ENCODE measurements at regions of chr11 and their contacts with region 1.

Region 1: DNA sequence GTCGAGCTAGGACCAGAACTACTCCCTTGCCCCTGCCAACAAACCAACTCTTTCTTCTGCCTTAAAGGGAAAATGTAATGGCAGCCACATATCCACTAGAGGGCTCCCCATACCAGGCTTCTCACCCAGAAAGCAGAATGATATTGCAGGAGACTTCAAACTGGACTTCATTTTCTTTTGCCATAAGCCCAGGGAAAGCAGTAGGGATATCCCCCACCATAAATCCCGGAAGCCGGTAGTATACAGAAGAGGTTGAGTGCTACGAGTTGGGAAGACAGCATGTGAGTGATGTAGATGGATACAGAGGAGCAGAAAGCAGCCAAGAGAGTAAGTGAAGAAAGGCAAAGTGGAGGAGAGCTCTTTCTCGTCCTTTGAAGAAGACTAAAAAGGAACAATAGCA is 12.1 kb downstream of the PLAAT5 start:
- DNase-seq: peak; percentile 6 to 70 (median 57)
- H3K4me3 ChIP-seq: no peak overlapping the region
- H3K4me3 Mint-ChIP-seq: no peak overlapping the region
- H3K27ac ChIP-seq: no peak overlapping the region
- H3K27ac Mint-ChIP-seq: no peak overlapping the region
- H3K4me1 ChIP-seq: no peaks in the 10 kb centered on the region
- H3K4me1 Mint-ChIP-seq: no peaks in the 10 kb centered on the region
- H3K27me3 ChIP-seq: no peaks in the 10 kb centered on the region
- H3K27me3 Mint-ChIP-seq: peaks cover 0 to 2% of the 10 kb centered on the region in 2 donors

Region 2: DNA sequence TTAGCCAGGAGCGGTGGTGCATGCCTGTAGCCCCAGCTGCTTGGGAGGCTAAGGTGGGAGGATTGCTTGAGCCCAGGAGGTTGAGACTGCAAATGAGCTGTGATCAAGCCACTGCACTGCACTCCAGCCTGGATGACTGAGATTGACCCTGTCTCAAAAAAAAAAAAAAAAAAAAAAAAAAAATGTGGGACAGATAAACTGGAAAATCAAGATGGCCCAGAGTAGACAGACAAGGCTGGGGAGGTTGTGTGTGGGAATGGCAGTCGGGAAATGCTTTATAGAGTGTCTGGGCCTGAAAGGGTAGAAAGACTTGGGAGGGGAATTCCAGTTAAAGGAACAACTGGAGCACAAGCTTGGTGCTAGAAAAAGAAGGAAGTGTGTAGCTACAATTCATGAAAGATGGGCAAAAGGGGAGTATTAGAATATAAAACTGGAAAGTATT is 621.3 kb before region 1 on chr11:
- CTCF ChIA-PET with region 1: no interaction called
- POLR2A ChIA-PET with region 1: no interaction called
- DNase-seq: no peak
- H3K4me3 ChIP-seq: no peak overlapping the region
- H3K4me3 Mint-ChIP-seq: peak overlapping the region; percentile 13 to 94 (median 21)
- H3K27ac ChIP-seq: peak overlapping the region; percentile 94
- H3K27ac Mint-ChIP-seq: peak overlapping the region in 2 of 8 donors; percentile 43 to 66
- H3K4me1 ChIP-seq: peaks cover 33% of the 10 kb centered on the region
- H3K4me1 Mint-ChIP-seq: peaks cover 41 to 47% (median 45%) of the 10 kb centered on the region in 3 donors
- H3K27me3 ChIP-seq: no peaks in the 10 kb centered on the region
- H3K27me3 Mint-ChIP-seq: peaks cover 0 to 6% of the 10 kb centered on the region in 2 donors

Region 3: GRCh38 chr11:63490551-63491239 is 11.8 kb after region 1 on chr11 and contains the start of gene PLAAT5:
- CTCF ChIA-PET with region 1: interaction called, 12 read pairs
- POLR2A ChIA-PET with region 1: no interaction called
- DNase-seq: peak in 1 of 5 donors; percentile 7
- H3K4me3 ChIP-seq: no peak within 1 kb of the TSS
- H3K4me3 Mint-ChIP-seq: peak within 1 kb of the TSS; percentile 70 to 91 (median 85)
- H3K27ac ChIP-seq: no peak within 1 kb of the TSS
- H3K27ac Mint-ChIP-seq: peak within 1 kb of the TSS in 5 of 8 donors; percentile 69 to 87 (median 80)
- H3K4me1 ChIP-seq: no peaks in the 10 kb centered on the region
- H3K4me1 Mint-ChIP-seq: peaks cover 8 to 32% (median 18%) of the 10 kb centered on the region in 3 donors
- H3K27me3 ChIP-seq: no peaks in the 10 kb centered on the region
- H3K27me3 Mint-ChIP-seq: peaks cover 2 to 4% of the 10 kb centered on the region in 2 donors
- total RNA-seq, gene PLAAT5: 0.26 to 0.89 TPM

Region 4: GRCh38 chr11:63536669-63537292 is 57.9 kb after region 1 on chr11 and contains the start of gene PLAAT4:
- CTCF ChIA-PET with region 1: interaction called, 22 read pairs
- POLR2A ChIA-PET with region 1: no interaction called
- DNase-seq: peak in 4 of 5 donors; percentile 31 to 57 (median 54)
- H3K4me3 ChIP-seq: peak within 1 kb of the TSS; percentile 78
- H3K4me3 Mint-ChIP-seq: peak within 1 kb of the TSS; percentile 91 to 99 (median 98)
- H3K27ac ChIP-seq: peak within 1 kb of the TSS; percentile 69
- H3K27ac Mint-ChIP-seq: peak within 1 kb of the TSS; percentile 90 to 100 (median 98)
- H3K4me1 ChIP-seq: peaks cover 82% of the 10 kb centered on the region
- H3K4me1 Mint-ChIP-seq: peaks cover 85 to 95% (median 92%) of the 10 kb centered on the region in 3 donors
- H3K27me3 ChIP-seq: no peaks in the 10 kb centered on the region
- H3K27me3 Mint-ChIP-seq: peaks cover 0 to 3% of the 10 kb centered on the region in 2 donors
- total RNA-seq, gene PLAAT4: 20.5 to 21.8 TPM

Region 5: DNA sequence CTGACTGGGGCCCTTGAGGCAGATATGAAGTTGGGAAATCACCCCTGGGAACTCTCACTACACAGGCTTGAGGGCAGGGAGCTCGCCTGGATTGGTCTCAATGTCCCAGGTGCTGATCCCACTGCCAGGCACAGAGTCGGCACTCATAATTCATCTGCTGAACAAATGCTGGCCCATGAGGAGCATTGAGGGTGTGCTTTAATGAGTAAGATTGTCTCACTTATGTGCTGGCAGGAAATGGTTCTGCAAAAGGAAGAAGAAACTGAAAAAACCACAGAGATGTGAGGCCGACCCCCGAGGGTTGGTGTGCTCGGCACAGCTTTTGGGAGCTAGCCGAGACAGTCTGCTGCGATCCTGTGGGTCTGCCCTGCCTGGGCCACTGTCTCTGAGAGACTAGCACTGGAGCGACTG is 74.8 kb after region 1 on chr11:
- CTCF ChIA-PET with region 1: interaction called, 29 read pairs
- POLR2A ChIA-PET with region 1: interaction called, 3 read pairs
- DNase-seq: peak; percentile 45 to 84 (median 70)
- H3K4me3 ChIP-seq: peak overlapping the region; percentile 21
- H3K4me3 Mint-ChIP-seq: peak overlapping the region; percentile 44 to 95 (median 91)
- H3K27ac ChIP-seq: peak overlapping the region; percentile 70
- H3K27ac Mint-ChIP-seq: peak overlapping the region; percentile 88 to 99 (median 97)
- H3K4me1 ChIP-seq: peaks cover 43% of the 10 kb centered on the region
- H3K4me1 Mint-ChIP-seq: peaks cover 55 to 72% (median 70%) of the 10 kb centered on the region in 3 donors
- H3K27me3 ChIP-seq: no peaks in the 10 kb centered on the region
- H3K27me3 Mint-ChIP-seq: no peaks in the 10 kb centered on the region

Region 6: GRCh38 chr11:63629426-63629825 is 150.5 kb after region 1 on chr11:
- CTCF ChIA-PET with region 1: interaction called, 88 read pairs
- POLR2A ChIA-PET with region 1: no interaction called
- DNase-seq: no peak
- H3K4me3 ChIP-seq: no peak overlapping the region
- H3K4me3 Mint-ChIP-seq: no peak overlapping the region
- H3K27ac ChIP-seq: no peak overlapping the region
- H3K27ac Mint-ChIP-seq: no peak overlapping the region
- H3K4me1 ChIP-seq: no peaks in the 10 kb centered on the region
- H3K4me1 Mint-ChIP-seq: peaks cover 5 to 9% (median 7%) of the 10 kb centered on the region in 3 donors
- H3K27me3 ChIP-seq: no peaks in the 10 kb centered on the region
- H3K27me3 Mint-ChIP-seq: no peaks in the 10 kb centered on the region

Region 7: GRCh38 chr11:63635762-63636465 is 157.0 kb after region 1 on chr11:
- CTCF ChIA-PET with region 1: interaction called, 88 read pairs
- POLR2A ChIA-PET with region 1: interaction called, 3 read pairs
- DNase-seq: peak; percentile 57 to 78 (median 59)
- H3K4me3 ChIP-seq: no peak overlapping the region
- H3K4me3 Mint-ChIP-seq: no peak overlapping the region
- H3K27ac ChIP-seq: no peak overlapping the region
- H3K27ac Mint-ChIP-seq: peak overlapping the region in 6 of 8 donors; percentile 0 to 40 (median 6)
- H3K4me1 ChIP-seq: no peaks in the 10 kb centered on the region
- H3K4me1 Mint-ChIP-seq: peaks cover 9 to 23% (median 16%) of the 10 kb centered on the region in 3 donors
- H3K27me3 ChIP-seq: no peaks in the 10 kb centered on the region
- H3K27me3 Mint-ChIP-seq: no peaks in the 10 kb centered on the region

Region 8: DNA sequence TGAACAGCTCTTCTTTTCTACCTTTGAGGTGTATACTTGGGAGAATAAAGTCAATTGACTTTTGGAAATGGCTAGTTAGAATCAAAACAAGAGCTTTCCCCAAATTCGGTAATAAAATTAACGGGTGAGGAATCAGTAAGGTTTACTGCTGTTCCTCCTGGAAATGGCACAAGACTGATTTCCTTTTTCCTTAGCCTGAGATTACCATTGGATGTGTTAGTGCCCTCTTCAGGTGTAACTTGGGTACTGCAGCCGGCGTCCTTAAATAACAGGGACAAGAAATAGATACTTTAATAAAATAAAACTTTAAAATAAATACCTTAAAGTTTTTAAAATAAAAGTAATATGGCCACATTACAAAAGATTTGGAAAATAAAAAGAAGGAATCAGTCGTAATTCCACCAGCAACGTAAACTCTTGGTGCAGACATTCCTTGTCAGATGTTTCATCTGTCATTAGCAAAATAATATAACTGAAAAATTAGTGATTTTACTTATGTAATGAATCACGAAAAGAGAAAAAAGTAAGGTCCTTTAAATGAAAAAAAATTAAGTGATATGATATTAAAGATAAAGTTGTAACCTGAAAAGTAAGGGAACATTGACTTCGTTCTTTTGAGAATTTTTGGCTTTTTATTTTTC is 259.9 kb after region 1 on chr11:
- CTCF ChIA-PET with region 1: interaction called, 17 read pairs
- POLR2A ChIA-PET with region 1: no interaction called
- DNase-seq: peak; percentile 28 to 75 (median 47)
- H3K4me3 ChIP-seq: no peak overlapping the region
- H3K4me3 Mint-ChIP-seq: no peak overlapping the region
- H3K27ac ChIP-seq: no peak overlapping the region
- H3K27ac Mint-ChIP-seq: peak overlapping the region in 2 of 8 donors; percentile 51 to 79
- H3K4me1 ChIP-seq: no peaks in the 10 kb centered on the region
- H3K4me1 Mint-ChIP-seq: peaks cover 2 to 4% (median 3%) of the 10 kb centered on the region in 3 donors
- H3K27me3 ChIP-seq: no peaks in the 10 kb centered on the region
- H3K27me3 Mint-ChIP-seq: no peaks in the 10 kb centered on the region